PC-3 (cell line): ENCODE measurements at regions of chr12 and their contacts with region 1.

Region 1: DNA sequence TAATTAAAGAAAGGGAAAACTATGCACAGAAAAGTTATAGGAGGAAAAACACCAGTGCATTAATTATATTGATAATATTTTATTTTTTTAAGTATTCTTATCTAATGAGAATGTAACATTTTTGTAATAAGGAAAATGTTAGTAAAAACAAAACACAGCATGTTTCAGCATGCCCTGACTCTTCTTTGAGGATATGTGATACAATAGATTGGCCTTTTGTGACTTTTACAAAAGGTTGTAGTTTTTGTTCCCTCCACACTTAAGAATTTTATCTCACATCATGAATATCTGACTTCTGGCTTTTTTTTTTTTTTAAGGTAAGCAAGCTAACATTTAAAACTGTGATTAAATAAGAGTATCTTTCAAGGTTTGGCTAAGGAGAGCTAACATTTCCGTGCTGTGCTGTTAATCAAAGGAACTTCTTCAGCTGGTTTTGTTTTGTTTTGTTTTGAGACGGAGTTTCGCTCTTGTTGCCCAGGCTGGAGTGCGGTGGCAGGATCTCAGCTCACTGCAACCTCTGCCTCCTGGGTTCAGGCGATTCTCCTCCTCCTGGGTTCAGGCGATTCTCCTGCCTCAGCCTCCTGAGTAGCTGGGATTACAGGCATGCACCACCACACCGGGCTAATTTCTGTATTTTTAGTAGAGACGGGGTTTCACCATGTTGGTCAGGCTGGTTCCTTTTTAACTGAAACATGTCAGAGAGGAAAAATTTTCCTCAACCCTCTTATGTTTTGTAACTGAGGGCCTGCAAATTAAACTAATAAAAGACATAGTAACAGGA is 30.8 kb upstream of the RESF1 start:
- DNase-seq: no peak
- ATAC-seq: no peak
- H3K4me3 ChIP-seq: no peak overlapping the region
- H3K27ac ChIP-seq: no peak overlapping the region
- H3K4me1 ChIP-seq: no peaks in the 10 kb centered on the region
- H3K27me3 ChIP-seq: no peaks in the 10 kb centered on the region
- CTCF ChIP-seq: no peak

Region 2: DNA sequence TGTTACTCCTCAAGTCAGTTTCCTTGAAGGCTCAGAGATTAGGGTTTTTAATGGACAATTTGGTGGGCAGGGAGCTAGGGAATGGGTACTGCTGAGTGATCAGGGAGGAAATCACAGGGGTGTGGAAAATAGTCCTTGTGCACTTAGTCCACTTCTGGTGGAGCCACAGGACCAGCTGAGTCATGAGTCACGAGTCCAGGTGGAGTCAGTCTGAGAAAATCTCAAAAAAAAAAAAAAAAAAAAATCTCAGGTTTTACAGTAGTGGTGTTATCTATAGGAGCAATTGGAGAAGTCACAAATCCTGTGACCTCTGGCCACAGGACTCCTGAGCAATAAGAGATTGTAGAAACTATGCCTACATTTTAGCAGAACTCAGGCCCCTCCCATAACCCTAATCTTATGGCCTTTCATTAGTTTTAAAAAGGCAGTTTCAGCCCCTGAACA is 171.4 kb before region 1 on chr12:
- CTCF ChIA-PET with region 1: no interaction called
- POLR2A ChIA-PET with region 1: interaction called, 20 read pairs
- intact Hi-C with region 1: no loop called
- DNase-seq: peak; percentile 52
- ATAC-seq: peak; percentile 76
- H3K4me3 ChIP-seq: no peak overlapping the region
- H3K27ac ChIP-seq: 0 out of 2 replicates have a peak overlapping the region, but pooled peaks have one; percentile 12
- H3K4me1 ChIP-seq: peaks cover 7% of the 10 kb centered on the region
- H3K27me3 ChIP-seq: no peaks in the 10 kb centered on the region
- CTCF ChIP-seq: no peak